CD4-positive, alpha-beta memory T cell (primary cell): ENCODE measurements at regions of chr10 and their contacts with region 1.

Region 1: DNA sequence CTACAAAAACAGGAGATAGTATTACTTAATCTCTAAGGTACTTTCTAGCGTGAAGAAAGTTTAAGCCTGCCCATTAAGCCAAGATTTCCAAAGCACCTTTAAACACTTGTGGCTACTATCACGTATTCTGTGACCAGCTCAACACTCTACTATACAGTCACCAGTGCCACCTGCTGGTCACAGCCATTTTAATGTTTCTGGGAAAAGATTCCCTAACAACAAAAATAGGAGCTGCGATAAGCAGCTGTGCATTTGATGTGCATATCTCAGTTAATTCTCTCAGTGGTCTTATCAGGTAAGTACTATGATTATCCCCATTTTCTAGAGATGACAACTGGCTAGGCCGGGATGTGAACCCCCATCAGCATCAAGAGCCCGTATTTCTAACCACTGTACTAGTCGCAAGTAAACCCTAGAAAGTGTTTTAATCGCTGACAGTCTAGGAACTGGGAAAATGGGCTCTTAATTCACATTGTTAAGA is 860 bp downstream of the SEC31B start:
- DNase-seq: peak; percentile 48 to 56 (median 52)
- H3K4me3 ChIP-seq: no peak overlapping the region
- H3K4me3 Mint-ChIP-seq: no peak overlapping the region
- H3K27ac ChIP-seq: no peak overlapping the region
- H3K27ac Mint-ChIP-seq: peak overlapping the region in 2 of 7 donors; percentile 43 to 82
- H3K4me1 ChIP-seq: no peaks in the 10 kb centered on the region
- H3K4me1 Mint-ChIP-seq: peaks cover 6 to 8% (median 7%) of the 10 kb centered on the region in 4 donors
- H3K27me3 ChIP-seq: no peaks in the 10 kb centered on the region
- H3K27me3 Mint-ChIP-seq: no peaks in the 10 kb centered on the region

Region 2: GRCh38 chr10:100433253-100434240 is 85.3 kb before region 1 on chr10:
- CTCF ChIA-PET with region 1: interaction called, 69 read pairs
- POLR2A ChIA-PET with region 1: no interaction called
- intact Hi-C with region 1: no loop called
- DNase-seq: peak; percentile 87 to 93 (median 90)
- H3K4me3 ChIP-seq: no peak overlapping the region
- H3K4me3 Mint-ChIP-seq: peak overlapping the region in 1 of 8 donors; percentile 4
- H3K27ac ChIP-seq: no peak overlapping the region
- H3K27ac Mint-ChIP-seq: peak overlapping the region in 2 of 7 donors; percentile 11 to 14
- H3K4me1 ChIP-seq: no peaks in the 10 kb centered on the region
- H3K4me1 Mint-ChIP-seq: peaks cover 0 to 3% (median 1%) of the 10 kb centered on the region in 4 donors
- H3K27me3 ChIP-seq: no peaks in the 10 kb centered on the region
- H3K27me3 Mint-ChIP-seq: peaks cover 2% of the 10 kb centered on the region in 2 donors

Region 3: DNA sequence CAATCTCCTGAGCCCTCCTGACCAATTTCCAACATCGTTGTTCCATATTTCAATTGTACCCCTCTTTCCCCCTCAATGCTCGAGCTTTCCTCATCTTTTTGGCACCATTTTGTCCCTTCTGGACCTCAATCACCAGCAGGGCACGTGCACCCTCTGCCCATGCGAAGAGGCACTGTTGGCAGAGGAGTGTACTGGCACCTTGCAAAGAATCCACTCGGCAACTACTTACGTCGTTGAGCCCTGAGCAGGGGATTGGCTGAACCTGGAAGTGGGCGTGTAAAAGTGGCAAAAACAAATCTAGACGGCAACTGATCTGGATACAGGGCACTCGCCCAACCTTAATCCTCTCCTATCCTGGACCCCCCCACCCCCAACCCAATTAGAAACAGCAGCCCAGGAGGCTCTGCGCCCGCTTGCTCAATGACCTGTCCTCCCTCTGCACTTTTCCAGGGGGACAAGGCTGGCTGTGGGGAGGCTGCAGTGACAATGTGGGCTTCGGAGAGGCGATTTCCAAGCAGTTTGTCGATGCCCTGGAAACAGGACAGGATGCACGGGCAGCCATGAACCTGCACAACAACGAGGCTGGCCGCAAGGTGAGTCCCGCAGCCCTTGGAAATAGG is 37.2 kb before region 1 on chr10:
- CTCF ChIA-PET with region 1: interaction called, 69 read pairs
- POLR2A ChIA-PET with region 1: interaction called, 11 read pairs
- intact Hi-C with region 1: loop called (anchors 1 kb)
- DNase-seq: peak; percentile 88 to 95 (median 91)
- H3K4me3 ChIP-seq: peak overlapping the region; percentile 49 to 82
- H3K4me3 Mint-ChIP-seq: peak overlapping the region; percentile 75 to 92 (median 86)
- H3K27ac ChIP-seq: no peak overlapping the region
- H3K27ac Mint-ChIP-seq: peak overlapping the region in 2 of 7 donors; percentile 42 to 90
- H3K4me1 ChIP-seq: peaks cover 12% of the 10 kb centered on the region
- H3K4me1 Mint-ChIP-seq: peaks cover 3 to 19% (median 10%) of the 10 kb centered on the region in 4 donors
- H3K27me3 ChIP-seq: peaks cover 18% of the 10 kb centered on the region
- H3K27me3 Mint-ChIP-seq: peaks cover 11 to 16% of the 10 kb centered on the region in 2 donors

Region 4: DNA sequence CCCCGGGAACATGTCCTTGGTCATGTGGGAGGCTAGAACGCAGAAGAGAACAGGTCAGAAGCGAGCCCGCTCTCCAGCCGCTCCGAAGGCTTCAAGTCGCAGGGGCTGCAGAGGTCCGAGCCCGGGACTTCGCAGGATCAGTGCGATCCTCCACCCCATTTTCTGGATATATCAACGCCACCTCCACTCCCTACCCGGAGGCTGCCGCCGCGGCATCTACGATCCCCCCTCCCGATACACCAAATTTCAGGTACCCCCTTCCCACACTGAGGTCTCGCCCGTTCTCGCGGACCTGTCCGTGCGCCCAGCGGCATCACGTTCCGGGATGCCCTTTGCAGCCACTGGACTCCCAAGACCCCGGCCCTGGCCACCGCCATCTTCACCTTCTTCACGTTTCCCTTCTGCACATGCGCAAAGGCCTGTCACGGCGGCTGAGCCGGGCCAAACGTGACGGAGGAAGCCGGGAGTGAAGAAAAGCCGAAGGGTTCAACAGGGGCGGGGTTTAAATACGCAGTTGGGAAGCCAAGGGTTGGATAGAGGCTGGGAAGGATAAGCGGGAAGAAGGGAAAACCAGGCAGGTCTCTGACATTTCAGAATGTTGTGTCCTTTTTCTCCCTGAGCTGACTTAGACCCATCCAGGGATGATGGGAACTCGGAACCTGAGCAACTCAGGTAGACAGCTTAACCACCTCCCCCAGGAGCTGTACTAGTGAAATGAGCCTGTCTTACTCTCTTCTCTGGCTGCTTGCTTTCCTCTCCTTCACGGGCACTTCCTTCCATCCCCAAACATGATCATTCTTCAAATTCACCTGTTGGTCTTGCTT is 10.9 kb after region 1 on chr10 and contains the start of gene NDUFB8:
- CTCF ChIA-PET with region 1: interaction called, 19 read pairs
- POLR2A ChIA-PET with region 1: interaction called, 3 read pairs
- intact Hi-C with region 1: no loop called
- DNase-seq: peak; percentile 85 to 89 (median 86)
- H3K4me3 ChIP-seq: peak within 1 kb of the TSS; percentile 87 to 100
- H3K4me3 Mint-ChIP-seq: peak within 1 kb of the TSS; percentile 85 to 100 (median 100)
- H3K27ac ChIP-seq: peak within 1 kb of the TSS; percentile 90
- H3K27ac Mint-ChIP-seq: peak within 1 kb of the TSS; percentile 79 to 100 (median 99)
- H3K4me1 ChIP-seq: peaks cover 34% of the 10 kb centered on the region
- H3K4me1 Mint-ChIP-seq: peaks cover 21 to 45% (median 30%) of the 10 kb centered on the region in 4 donors
- H3K27me3 ChIP-seq: no peaks in the 10 kb centered on the region
- H3K27me3 Mint-ChIP-seq: no peaks in the 10 kb centered on the region
- total RNA-seq, gene NDUFB8: 141 to 162 TPM